Dorsolateral prefrontal cortex (tissue), 120 donors: ENCODE measurements at regions of chr7 and their contacts with region 1.

Region 1: DNA sequence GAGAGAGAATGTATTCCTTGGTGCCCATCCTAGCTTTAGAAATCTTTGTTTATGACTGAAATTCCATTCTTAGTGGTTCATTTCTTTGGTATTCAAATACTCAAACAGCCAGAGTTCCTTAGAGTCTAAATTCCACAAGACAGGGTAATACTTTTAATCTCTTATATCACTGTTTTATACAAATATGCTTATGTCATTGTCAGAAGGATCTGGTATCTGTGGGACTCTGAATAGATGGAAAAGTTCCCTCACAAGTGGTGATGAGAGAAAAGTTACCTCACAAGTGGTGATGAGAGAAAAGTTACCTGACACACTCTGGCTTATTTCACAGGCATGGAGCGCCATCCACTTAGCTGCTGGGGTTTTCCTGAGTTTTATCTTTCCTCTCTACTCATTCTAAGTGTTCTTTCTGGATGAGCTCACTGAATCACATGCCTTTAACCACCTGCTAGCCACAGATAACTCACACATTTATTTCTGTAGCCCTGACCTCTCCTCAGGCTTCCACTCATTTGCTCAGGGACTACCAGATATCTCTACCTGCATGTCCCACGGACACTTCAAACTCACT is 784.0 kb downstream of the SUGCT start:
- DNase-seq: no peak
- H3K4me3 ChIP-seq: no peak overlapping the region
- H3K27ac ChIP-seq: no peak overlapping the region
- H3K27me3 ChIP-seq: no peaks in the 10 kb centered on the region
- CTCF ChIP-seq: no peak

Region 2: DNA sequence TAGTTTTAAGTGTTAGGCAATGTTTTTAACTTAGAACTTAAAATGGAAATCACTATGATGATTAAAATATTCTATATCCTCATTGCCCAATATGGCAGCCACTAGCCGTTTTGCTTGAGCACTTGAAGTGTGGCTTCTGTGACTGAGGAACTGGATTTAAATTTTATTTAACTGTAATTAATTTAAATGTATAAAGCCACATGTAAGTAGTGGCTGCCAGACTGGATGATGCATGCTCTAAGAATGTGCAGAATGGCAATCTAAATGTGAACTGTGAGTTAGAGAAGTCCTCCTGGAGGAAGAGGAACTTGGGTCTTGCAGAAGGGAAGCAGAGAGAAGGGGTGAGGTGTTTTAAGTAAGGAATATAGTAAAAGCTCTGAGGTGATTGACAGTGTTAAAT is 332.6 kb before region 1 on chr7:
- intact Hi-C with region 1: no loop called
- DNase-seq: no peak
- H3K4me3 ChIP-seq: no peak overlapping the region
- H3K27ac ChIP-seq: no peak overlapping the region
- H3K27me3 ChIP-seq: no peaks in the 10 kb centered on the region
- CTCF ChIP-seq: no peak

Region 3: DNA sequence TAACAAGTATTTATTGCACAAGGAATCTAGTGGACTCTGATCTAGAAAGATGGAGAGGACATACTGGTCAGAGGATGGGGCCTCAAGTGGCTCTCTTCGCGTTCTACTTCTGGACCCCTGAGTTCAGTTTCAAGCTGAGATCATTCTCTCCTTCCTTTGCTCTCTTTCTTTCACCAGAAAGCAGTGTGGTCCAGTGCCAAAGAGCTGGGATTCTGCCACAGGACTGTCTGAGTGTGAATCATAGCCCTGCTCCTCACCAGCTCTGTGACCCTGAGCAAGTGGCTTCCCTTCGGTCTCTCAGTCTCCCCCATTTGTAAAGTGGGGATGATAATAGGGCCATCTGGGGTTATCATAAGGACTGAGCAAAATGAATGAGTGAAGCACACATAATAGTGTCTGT is 68.8 kb before region 1 on chr7:
- intact Hi-C with region 1: no loop called
- DNase-seq: no peak
- H3K4me3 ChIP-seq: no peak overlapping the region
- H3K27ac ChIP-seq: no peak overlapping the region
- H3K27me3 ChIP-seq: no peaks in the 10 kb centered on the region
- CTCF ChIP-seq: no peak

Region 4: GRCh38 chr7:40866604-40867003 is 52.2 kb before region 1 on chr7:
- intact Hi-C with region 1: loop called in 1 of 2 experiments (anchors 2 kb)
- DNase-seq: no peak
- H3K4me3 ChIP-seq: no peak overlapping the region
- H3K27ac ChIP-seq: no peak overlapping the region
- H3K27me3 ChIP-seq: no peaks in the 10 kb centered on the region
- CTCF ChIP-seq: no peak